Body of pancreas (tissue), 4 donors: ENCODE measurements at regions of chr11 and their contacts with region 1.

Region 1: GRCh38 chr11:63738720-63739360 is 29.7 kb downstream of the ZFTA start:
- DNase-seq: peak; percentile 69 to 85 (median 78)
- ATAC-seq: peak; percentile 75
- H3K4me3 ChIP-seq: no peak overlapping the region
- H3K27ac ChIP-seq: peak overlapping the region in 1 of 4 donors; percentile 29
- H3K4me1 ChIP-seq: no peaks in the 10 kb centered on the region
- H3K27me3 ChIP-seq: no peaks in the 10 kb centered on the region
- CTCF ChIP-seq: peak; percentile 84 to 100 (median 90)
- POLR2A ChIP-seq: no peak

Region 2: DNA sequence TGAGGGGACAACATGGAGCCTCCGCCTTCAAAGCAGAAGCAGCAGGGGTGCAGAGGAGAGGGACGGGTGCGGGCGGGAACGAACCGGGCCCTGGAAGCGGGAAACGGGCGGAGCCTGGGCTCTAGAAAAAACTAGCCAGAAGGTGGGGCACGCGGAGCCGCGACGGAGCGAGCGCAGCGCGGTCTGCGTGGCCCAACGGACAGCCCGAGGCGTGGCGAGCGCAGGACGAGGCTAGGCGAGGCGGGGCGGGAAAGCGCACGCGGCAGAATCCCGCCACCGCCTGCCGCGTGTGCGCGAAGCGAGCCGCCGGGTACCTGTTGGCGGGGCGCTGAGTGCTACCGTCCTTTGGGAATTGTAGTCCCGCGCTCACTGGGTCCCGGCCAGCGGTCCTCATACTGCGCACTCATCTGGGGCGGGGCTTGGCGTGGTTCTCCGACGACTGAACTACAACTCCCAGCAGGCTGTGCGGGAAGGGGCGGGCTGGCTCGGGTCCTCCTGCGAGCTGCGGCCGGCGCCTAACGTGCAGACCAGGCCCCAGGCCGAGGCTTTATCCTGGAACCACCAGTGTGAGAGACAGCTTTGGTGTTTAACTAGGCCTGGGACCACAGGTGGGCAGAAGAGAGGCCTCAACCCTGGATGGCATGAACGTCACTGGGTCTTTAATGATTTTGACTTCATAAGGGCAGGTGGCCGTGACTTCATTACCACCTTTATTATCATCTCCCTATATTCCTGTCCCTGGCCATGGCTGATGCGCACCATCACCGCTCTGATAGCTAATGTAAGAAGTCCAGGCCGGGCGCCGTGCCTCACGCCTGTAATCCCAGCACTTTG is 67.3 kb before region 1 on chr11 and contains the start of gene ATL3:
- intact Hi-C with region 1: loop called (anchors 10 kb)
- DNase-seq: peak; percentile 98 to 100 (median 98)
- ATAC-seq: peak; percentile 95
- H3K4me3 ChIP-seq: peak within 1 kb of the TSS; percentile 15 to 71
- H3K27ac ChIP-seq: peak within 1 kb of the TSS; percentile 76 to 96 (median 88)
- H3K4me1 ChIP-seq: peaks cover 36% of the 10 kb centered on the region
- H3K27me3 ChIP-seq: no peaks in the 10 kb centered on the region
- CTCF ChIP-seq: peak in 4 of 7 experiments; percentile 8 to 33 (median 21)
- POLR2A ChIP-seq: peak; percentile 41 to 67 (median 61)
- total RNA-seq, gene ATL3: 17.8 to 32.7 TPM

Region 3: DNA sequence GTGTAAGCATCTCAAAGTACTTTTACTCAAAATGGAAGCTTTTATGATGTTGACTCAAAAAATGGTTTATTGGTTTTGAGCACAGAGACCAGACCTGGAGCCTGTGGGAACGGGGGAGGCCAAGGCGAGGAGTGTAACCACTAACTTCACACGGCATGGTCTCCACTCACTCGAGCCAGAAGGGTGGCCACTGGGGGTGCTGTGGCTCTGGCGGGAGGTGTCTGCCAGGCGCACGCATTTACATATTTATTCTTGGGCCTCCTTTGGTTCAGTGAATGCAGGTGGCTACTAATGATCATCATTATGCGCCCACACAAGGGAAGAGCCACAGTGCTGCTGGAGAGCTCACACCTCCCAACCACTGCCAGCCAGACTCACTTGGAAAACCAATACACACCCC is 361.5 kb after region 1 on chr11:
- intact Hi-C with region 1: no loop called
- DNase-seq: no peak
- ATAC-seq: no peak
- H3K4me3 ChIP-seq: no peak overlapping the region
- H3K27ac ChIP-seq: no peak overlapping the region
- H3K4me1 ChIP-seq: peaks cover 2% of the 10 kb centered on the region
- H3K27me3 ChIP-seq: no peaks in the 10 kb centered on the region
- CTCF ChIP-seq: no peak
- POLR2A ChIP-seq: no peak